Heart left ventricle (tissue), 16 donors: ENCODE measurements at regions of chr6 and their contacts with region 1.

Region 1: GRCh38 chr6:136792410-136793262 is at the start of gene MAP3K5:
- DNase-seq: peak; percentile 91 to 97 (median 93)
- ATAC-seq: peak; percentile 81 to 93 (median 91)
- H3K4me3 ChIP-seq: peak within 1 kb of the TSS; percentile 29 to 94 (median 78)
- H3K27ac ChIP-seq: peak within 1 kb of the TSS; percentile 84 to 98 (median 94)
- H3K4me1 ChIP-seq: peaks cover 0 to 40% (median 18%) of the 10 kb centered on the region in 12 donors
- H3K27me3 ChIP-seq: no peaks in the 10 kb centered on the region
- CTCF ChIP-seq: peak; percentile 64 to 82 (median 76)
- POLR2A ChIP-seq: peak in 1 of 2 donors; percentile 40
- total RNA-seq, gene MAP3K5: 18.7 to 34.1 (median 28.0) TPM

Region 2: DNA sequence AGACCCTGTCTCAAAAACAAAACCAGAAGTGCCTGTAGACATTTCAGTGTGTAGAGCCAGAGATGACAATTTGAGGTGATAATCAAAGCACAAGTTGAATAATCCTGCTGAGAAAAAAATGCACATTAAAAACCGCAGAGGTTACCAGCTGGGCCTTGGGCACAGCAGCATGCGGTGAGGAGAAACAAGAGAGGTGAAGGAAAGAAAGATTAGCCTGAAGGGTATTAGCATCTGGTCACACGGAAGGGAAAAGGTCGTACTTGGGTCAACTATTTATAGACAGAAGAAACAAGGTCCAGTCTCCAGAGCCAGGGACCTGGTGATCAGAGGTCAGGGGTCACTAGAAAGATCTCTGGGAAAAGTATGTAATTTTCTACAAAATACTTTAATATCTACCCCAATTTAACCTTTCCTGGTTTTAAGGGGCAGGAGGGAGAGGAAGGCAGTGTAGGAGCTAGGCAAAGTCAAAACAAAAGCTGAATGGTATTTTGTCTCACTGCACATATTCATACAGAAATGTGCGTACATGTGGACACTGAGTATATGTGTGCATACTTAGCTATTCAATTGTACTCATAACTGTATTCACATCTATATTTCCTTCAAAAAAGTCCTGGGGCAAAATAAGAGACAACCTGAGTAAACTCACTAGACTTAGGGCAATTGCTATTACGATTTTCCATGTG is 252.5 kb before region 1 on chr6:
- intact Hi-C with region 1: no loop called
- DNase-seq: no peak
- ATAC-seq: no peak
- H3K4me3 ChIP-seq: no peak overlapping the region
- H3K27ac ChIP-seq: no peak overlapping the region
- H3K4me1 ChIP-seq: no peaks in the 10 kb centered on the region
- H3K27me3 ChIP-seq: no peaks in the 10 kb centered on the region
- CTCF ChIP-seq: no peak
- POLR2A ChIP-seq: no peak

Region 3: GRCh38 chr6:136582711-136583471 is 209.7 kb before region 1 on chr6:
- intact Hi-C with region 1: loop called in 6 of 10 experiments (anchors 2 to 5 kb)
- DNase-seq: no peak
- ATAC-seq: peak in 3 of 4 donors; percentile 42 to 55 (median 54)
- H3K4me3 ChIP-seq: no peak overlapping the region
- H3K27ac ChIP-seq: peak overlapping the region in 8 of 12 donors; percentile 2 to 57 (median 36)
- H3K4me1 ChIP-seq: peaks cover 0 to 28% (median 9%) of the 10 kb centered on the region in 12 donors
- H3K27me3 ChIP-seq: no peaks in the 10 kb centered on the region
- CTCF ChIP-seq: peak; percentile 40 to 64 (median 53)
- POLR2A ChIP-seq: no peak

Region 4: GRCh38 chr6:136607932-136608772 is 184.5 kb before region 1 on chr6:
- intact Hi-C with region 1: loop called in 1 of 10 experiments (anchors 10 kb)
- DNase-seq: peak in 4 of 5 donors; percentile 44 to 60 (median 52)
- ATAC-seq: peak; percentile 41 to 64 (median 54)
- H3K4me3 ChIP-seq: no peak overlapping the region
- H3K27ac ChIP-seq: no peak overlapping the region
- H3K4me1 ChIP-seq: peaks cover 0 to 41% (median 9%) of the 10 kb centered on the region in 12 donors
- H3K27me3 ChIP-seq: no peaks in the 10 kb centered on the region
- CTCF ChIP-seq: peak; percentile 53 to 78 (median 70)
- POLR2A ChIP-seq: no peak

Region 5: DNA sequence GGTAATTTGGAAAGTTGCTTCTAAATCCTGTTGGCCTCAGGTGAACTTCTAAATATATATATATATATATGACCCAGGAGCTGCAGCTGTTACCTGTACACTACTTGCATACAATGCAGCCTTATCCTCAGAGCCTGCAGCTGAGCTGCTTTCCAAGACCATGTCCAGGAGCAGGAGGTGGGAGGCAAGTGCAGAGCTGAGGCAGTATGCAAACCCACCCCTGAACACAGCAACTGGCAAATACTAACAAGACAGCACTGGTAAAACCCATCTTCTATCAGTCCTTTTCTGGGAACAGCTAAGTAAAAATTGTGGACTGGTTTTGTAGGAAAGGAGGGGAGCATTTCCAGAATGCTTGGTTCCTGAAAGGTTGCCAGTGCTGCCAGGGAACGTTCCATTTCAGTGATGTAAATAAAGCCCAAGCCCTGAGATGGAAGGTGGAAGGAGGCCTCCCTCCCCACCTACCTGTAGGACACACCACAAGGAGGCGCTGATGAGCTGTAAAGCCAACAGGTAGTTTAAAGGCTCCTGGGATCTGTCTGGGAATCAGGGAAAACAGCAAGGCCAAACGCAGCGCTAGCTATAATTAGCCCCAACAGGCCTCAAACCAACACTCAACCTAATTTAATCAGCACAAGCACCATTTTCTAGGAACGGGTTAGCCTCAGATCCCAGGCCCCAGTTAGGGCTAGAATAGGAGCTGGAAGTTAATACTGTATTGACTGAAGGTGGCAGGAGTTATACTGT is 148.6 kb before region 1 on chr6:
- intact Hi-C with region 1: loop called (anchors 1 to 2 kb)
- DNase-seq: peak; percentile 88 to 96 (median 89)
- ATAC-seq: peak; percentile 94 to 96 (median 94)
- H3K4me3 ChIP-seq: no peak overlapping the region
- H3K27ac ChIP-seq: peak overlapping the region in 11 of 12 donors; percentile 9 to 76 (median 61)
- H3K4me1 ChIP-seq: peaks cover 0 to 56% (median 23%) of the 10 kb centered on the region in 12 donors
- H3K27me3 ChIP-seq: no peaks in the 10 kb centered on the region
- CTCF ChIP-seq: peak; percentile 71 to 95 (median 86)
- POLR2A ChIP-seq: peak in 1 of 2 donors; percentile 9

Region 6: GRCh38 chr6:136710877-136711552 is 81.6 kb before region 1 on chr6:
- intact Hi-C with region 1: loop called in 5 of 10 experiments (anchors 5 to 10 kb)
- DNase-seq: no peak
- ATAC-seq: peak in 2 of 4 donors; percentile 53 to 55
- H3K4me3 ChIP-seq: peak overlapping the region in 1 of 12 donors; percentile 7
- H3K27ac ChIP-seq: peak overlapping the region in 8 of 12 donors; percentile 4 to 54 (median 19)
- H3K4me1 ChIP-seq: peaks cover 0 to 27% (median 8%) of the 10 kb centered on the region in 12 donors
- H3K27me3 ChIP-seq: no peaks in the 10 kb centered on the region
- CTCF ChIP-seq: no peak
- POLR2A ChIP-seq: no peak

Region 7: DNA sequence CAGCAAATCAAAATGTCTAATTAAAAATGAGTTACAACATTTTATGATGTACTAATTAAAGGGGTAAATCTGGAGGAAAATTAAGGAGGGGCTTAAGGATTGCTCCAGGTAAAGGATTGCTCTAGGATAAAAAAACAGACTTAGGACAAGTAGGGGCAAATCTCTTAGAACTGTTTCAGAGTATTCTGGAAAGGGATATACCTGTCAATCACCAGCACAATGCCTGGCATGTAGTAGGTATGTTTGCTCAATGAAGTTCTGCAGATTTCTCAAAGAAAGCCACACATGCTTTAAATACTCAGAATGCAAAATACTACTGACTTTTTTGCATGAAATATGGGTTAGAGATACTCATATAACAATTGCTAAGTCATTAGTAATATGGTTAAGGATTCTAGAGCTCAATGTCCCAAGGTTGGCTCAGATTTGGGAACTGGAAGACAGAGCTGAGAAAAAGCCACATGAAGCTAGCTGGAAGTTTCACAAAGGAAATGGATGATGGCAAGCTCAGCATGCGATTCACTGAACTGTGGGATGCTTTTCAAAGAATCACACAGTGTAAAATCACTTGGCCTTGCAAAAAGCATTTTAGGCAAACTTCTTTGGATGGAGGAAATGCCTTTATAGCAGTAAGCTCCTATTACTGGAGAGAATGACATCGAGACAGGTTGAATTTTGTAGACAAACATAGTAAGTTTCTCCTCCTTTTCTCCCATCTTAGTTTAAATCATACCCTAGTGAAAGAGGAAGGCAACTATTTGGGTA is 73.2 kb before region 1 on chr6:
- intact Hi-C with region 1: loop called in 5 of 10 experiments (anchors 5 to 10 kb)
- DNase-seq: no peak
- ATAC-seq: peak in 1 of 4 donors; percentile 15
- H3K4me3 ChIP-seq: peak overlapping the region in 1 of 12 donors; percentile 19
- H3K27ac ChIP-seq: peak overlapping the region in 3 of 12 donors; percentile 1 to 69 (median 8)
- H3K4me1 ChIP-seq: peaks cover 0 to 54% (median 25%) of the 10 kb centered on the region in 12 donors
- H3K27me3 ChIP-seq: no peaks in the 10 kb centered on the region
- CTCF ChIP-seq: no peak
- POLR2A ChIP-seq: no peak

Region 8: GRCh38 chr6:136745300-136745699 is 47.3 kb before region 1 on chr6:
- intact Hi-C with region 1: loop called in 2 of 10 experiments (anchors 5 kb)
- DNase-seq: no peak
- ATAC-seq: peak; percentile 52 to 69 (median 66)
- H3K4me3 ChIP-seq: peak overlapping the region in 6 of 12 donors; percentile 15 to 41 (median 25)
- H3K27ac ChIP-seq: peak overlapping the region in 7 of 12 donors; percentile 15 to 59 (median 32)
- H3K4me1 ChIP-seq: peaks cover 0 to 42% (median 16%) of the 10 kb centered on the region in 12 donors
- H3K27me3 ChIP-seq: no peaks in the 10 kb centered on the region
- CTCF ChIP-seq: no peak
- POLR2A ChIP-seq: no peak